ENCODE measurements at regions of chr10 and their contacts with region 1.

Region 1: GRCh38 chr10:28807760-28808613 is 130.7 kb downstream of the BAMBI start:
- DNase-seq: no peak
- ATAC-seq: peak in 2 of 4 donors; percentile 48 to 56
- H3K4me3 ChIP-seq: peak overlapping the region in 4 of 12 donors; percentile 7 to 41 (median 23)
- H3K27ac ChIP-seq: peak overlapping the region; percentile 45 to 92 (median 75)
- H3K4me1 ChIP-seq: peaks cover 0 to 29% (median 18%) of the 10 kb centered on the region in 12 donors
- H3K27me3 ChIP-seq: no peaks in the 10 kb centered on the region
- CTCF ChIP-seq: no peak
- POLR2A ChIP-seq: no peak

Region 2: DNA sequence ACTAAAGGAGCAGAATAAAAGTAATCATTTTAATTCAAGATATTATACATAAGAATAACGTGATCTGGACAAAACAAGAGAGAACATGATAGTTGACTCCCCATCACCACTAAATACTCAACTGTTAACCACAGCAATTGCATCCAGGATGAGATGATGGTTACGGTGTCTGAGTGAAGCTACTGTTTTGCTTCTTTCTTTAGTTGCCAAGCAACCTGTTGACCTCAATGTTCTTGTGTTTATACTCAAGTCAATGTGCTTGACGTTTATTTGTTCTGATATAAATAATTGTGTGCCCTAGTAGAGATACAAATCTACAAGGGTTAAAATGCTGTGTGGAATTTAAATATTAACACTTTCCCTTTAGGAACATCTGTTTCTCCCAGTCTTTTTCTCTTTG is 473.7 kb before region 1 on chr10:
- intact Hi-C with region 1: no loop called
- DNase-seq: no peak
- ATAC-seq: peak; percentile 62 to 89 (median 77)
- H3K4me3 ChIP-seq: peak overlapping the region in 1 of 12 donors; percentile 46
- H3K27ac ChIP-seq: peak overlapping the region in 6 of 12 donors; percentile 7 to 83 (median 40)
- H3K4me1 ChIP-seq: peaks cover 0 to 39% (median under 1%) of the 10 kb centered on the region in 12 donors
- H3K27me3 ChIP-seq: no peaks in the 10 kb centered on the region
- CTCF ChIP-seq: no peak
- POLR2A ChIP-seq: no peak

Region 3: GRCh38 chr10:28788252-28788651 is 19.7 kb before region 1 on chr10:
- intact Hi-C with region 1: no loop called
- DNase-seq: no peak
- ATAC-seq: no peak
- H3K4me3 ChIP-seq: no peak overlapping the region
- H3K27ac ChIP-seq: no peak overlapping the region
- H3K4me1 ChIP-seq: peaks cover 0 to 5% (median 0%) of the 10 kb centered on the region in 12 donors
- H3K27me3 ChIP-seq: peaks cover 0 to 3% (median 0%) of the 10 kb centered on the region in 9 donors
- CTCF ChIP-seq: no peak
- POLR2A ChIP-seq: no peak

Region 4: DNA sequence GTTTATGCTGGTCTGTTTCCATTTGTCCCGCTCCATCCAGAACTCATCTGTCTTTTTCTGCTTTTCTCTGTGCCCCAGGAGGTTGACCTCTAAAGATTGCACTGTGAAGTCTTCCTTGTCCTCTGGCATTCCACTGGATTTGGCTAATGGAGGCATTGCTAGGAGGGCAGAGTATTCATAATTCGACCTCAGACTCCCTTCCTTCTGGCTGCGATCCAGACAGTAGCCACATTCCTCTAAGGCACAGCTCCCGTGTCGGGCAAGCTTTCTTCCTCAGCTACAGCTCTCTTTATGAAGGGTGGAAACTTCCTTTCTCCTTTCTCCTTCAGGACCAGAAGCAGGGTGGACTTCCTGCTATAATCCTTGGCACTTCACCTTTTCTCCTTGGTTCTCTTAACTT is 45.2 kb after region 1 on chr10:
- intact Hi-C with region 1: no loop called
- DNase-seq: no peak
- ATAC-seq: no peak
- H3K4me3 ChIP-seq: no peak overlapping the region
- H3K27ac ChIP-seq: no peak overlapping the region
- H3K4me1 ChIP-seq: peaks cover 0 to 3% (median 0%) of the 10 kb centered on the region in 12 donors
- H3K27me3 ChIP-seq: no peaks in the 10 kb centered on the region
- CTCF ChIP-seq: no peak
- POLR2A ChIP-seq: no peak

Region 5: DNA sequence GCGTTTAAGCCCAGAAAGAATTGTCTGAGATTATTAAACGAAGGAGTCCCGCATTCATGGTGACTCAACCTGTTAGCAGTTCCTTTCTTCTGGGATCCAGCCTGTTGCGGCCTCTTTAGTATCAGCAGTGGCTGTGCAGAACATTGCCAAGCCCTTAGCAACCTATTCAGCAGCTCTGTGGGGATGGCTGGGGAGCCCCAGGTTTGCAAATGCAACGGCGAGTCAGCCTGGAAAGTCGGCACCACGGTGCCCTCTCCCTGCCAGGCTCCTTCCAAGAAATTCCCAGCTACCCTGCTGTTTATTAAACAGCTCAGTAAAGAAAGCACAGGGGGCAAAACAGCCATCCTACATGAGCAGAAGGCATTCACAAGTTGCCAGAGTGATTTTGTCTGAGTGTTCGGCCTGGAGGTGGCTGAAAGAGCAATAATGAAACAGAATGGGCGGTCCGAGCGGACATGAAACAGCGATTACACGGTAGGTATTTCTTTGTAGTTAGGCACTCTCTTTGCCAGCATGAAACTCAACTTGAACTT is 67.6 kb after region 1 on chr10:
- intact Hi-C with region 1: loop called in 1 of 10 experiments (anchors 10 kb)
- DNase-seq: no peak
- ATAC-seq: peak in 2 of 4 donors; percentile 26 to 53
- H3K4me3 ChIP-seq: no peak overlapping the region
- H3K27ac ChIP-seq: no peak overlapping the region
- H3K4me1 ChIP-seq: peaks cover 0 to 20% (median 11%) of the 10 kb centered on the region in 12 donors
- H3K27me3 ChIP-seq: peaks cover 0 to 2% (median 0%) of the 10 kb centered on the region in 9 donors
- CTCF ChIP-seq: peak in 1 of 12 donors; percentile 10
- POLR2A ChIP-seq: no peak

Region 6: GRCh38 chr10:29131952-29132820 is 324.2 kb after region 1 on chr10:
- intact Hi-C with region 1: loop called in 1 of 10 experiments (anchors 10 kb)
- DNase-seq: peak in 4 of 5 donors; percentile 16 to 64 (median 38)
- ATAC-seq: peak; percentile 23 to 86 (median 74)
- H3K4me3 ChIP-seq: no peak overlapping the region
- H3K27ac ChIP-seq: peak overlapping the region in 6 of 12 donors; percentile 8 to 31 (median 18)
- H3K4me1 ChIP-seq: peaks cover 0 to 17% (median 4%) of the 10 kb centered on the region in 12 donors
- H3K27me3 ChIP-seq: peaks cover 0 to under 1% (median 0%) of the 10 kb centered on the region in 9 donors
- CTCF ChIP-seq: no peak
- POLR2A ChIP-seq: no peak

Region 7: DNA sequence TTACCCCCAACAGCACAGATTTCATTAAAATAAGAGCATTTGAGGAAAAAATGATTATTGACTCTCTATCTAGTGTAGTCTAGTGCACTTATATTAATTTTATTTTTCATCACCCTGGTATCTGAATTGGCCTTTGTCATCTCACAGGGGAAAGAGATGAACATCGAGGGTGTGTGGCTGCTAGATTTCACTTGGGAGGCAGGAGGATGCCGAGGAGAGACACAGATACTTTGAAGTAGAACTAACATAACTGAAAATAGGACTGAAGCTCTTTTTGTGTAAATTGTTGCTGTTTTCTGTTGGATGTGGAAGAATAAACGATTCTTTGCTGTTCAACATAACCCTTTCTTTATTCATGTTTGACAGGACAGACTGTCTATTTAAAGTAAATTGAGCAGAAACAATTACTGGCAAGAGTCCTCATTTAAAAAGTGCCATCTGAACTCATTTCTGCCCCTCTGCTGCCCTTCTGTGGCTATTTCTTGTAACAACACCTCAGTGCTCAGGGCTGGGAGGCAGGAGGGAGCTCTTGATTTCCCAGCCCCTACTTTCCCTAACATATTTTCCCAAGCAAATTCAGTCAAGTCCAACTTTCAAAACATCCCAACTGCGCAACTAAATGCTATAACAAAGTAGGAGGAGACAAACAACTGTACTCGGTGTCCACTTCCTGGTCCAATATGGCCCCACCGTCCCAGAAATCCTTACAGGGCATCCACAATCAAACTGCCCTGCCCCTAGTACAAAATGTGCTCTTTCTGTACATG is 496.5 kb after region 1 on chr10:
- intact Hi-C with region 1: no loop called
- DNase-seq: peak in 3 of 5 donors; percentile 40 to 49 (median 42)
- ATAC-seq: peak; percentile 73 to 88 (median 80)
- H3K4me3 ChIP-seq: peak overlapping the region in 3 of 12 donors; percentile 3 to 11 (median 7)
- H3K27ac ChIP-seq: peak overlapping the region in 5 of 12 donors; percentile 16 to 49 (median 36)
- H3K4me1 ChIP-seq: peaks cover 0 to 10% (median 5%) of the 10 kb centered on the region in 12 donors
- H3K27me3 ChIP-seq: peaks cover 0 to 6% (median 0%) of the 10 kb centered on the region in 9 donors
- CTCF ChIP-seq: peak; percentile 62 to 90 (median 78)
- POLR2A ChIP-seq: no peak